Heart left ventricle (tissue), 16 donors: ENCODE measurements at regions of chr20 and their contacts with region 1.

Region 1: DNA sequence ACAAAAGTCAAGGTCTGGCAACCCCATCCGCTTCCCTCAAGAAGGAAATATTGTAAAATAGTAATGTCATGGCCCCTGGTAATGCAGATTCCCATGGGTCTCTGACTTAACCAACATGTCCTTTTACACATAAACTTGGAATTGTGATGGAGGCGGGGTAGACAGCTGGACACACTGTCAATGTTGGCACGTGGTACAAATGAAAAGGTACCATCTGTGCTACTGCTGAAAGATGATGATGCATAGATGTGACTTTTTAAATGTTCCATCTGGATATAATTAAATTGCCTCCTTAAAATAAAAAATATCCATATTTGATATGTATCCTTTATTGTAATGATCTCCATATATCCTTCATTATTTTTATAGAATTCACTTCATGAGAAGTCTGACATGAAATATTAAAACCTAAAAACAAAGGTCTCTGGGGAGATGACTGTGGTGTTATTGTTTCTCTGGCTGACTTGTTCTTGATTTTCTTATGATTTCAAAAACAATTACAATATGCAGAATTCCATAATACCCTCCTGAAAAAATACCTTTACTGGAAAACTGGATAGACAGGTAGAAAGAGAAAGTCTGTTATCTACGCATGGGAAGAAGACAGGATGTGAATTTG is 104.5 kb downstream of the MKKS start:
- DNase-seq: no peak
- ATAC-seq: no peak
- H3K4me3 ChIP-seq: no peak overlapping the region
- H3K27ac ChIP-seq: no peak overlapping the region
- H3K4me1 ChIP-seq: peaks cover 0 to 4% (median 0%) of the 10 kb centered on the region in 12 donors
- H3K27me3 ChIP-seq: no peaks in the 10 kb centered on the region
- CTCF ChIP-seq: no peak
- POLR2A ChIP-seq: no peak

Region 2: DNA sequence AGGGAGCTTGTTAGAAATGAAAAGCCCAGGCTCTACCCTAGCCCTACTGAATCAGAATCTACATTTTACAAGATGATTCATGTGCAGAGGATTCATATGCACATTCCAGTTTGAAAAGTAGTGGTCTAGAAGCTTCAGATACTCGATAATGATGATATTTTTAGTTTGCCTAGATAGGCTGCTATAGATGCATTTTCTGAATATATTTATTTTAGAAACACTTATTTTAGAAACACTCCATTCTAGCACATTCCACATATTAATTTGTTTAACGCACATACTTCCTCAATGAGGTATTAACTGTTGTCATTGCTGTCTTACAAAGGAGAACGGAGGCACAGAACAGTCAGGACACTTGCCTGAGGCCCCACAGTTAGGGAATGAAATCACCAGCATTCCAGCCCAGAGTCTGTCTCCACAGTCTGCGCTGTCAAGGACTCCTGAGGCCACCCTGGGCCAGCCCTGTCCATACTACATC is 46.5 kb before region 1 on chr20:
- intact Hi-C with region 1: loop called in 1 of 10 experiments (anchors 2 kb)
- DNase-seq: no peak
- ATAC-seq: no peak
- H3K4me3 ChIP-seq: no peak overlapping the region
- H3K27ac ChIP-seq: no peak overlapping the region
- H3K4me1 ChIP-seq: no peaks in the 10 kb centered on the region
- H3K27me3 ChIP-seq: peaks cover 0 to 9% (median 2%) of the 10 kb centered on the region in 9 donors
- CTCF ChIP-seq: no peak
- POLR2A ChIP-seq: no peak